ENCODE measurements at regions of chr12 and their contacts with region 1.

Region 1: GRCh38 chr12:26701604-26702215 is 131.3 kb downstream of the ITPR2 start:
- DNase-seq: no peak
- H3K4me3 Mint-ChIP-seq: no peak overlapping the region
- H3K27ac Mint-ChIP-seq: no peak overlapping the region
- H3K4me1 Mint-ChIP-seq: no peaks in the 10 kb centered on the region
- H3K27me3 Mint-ChIP-seq: no peaks in the 10 kb centered on the region

Region 2: GRCh38 chr12:26715232-26715631 is 13.5 kb after region 1 on chr12:
- CTCF ChIA-PET with region 1: interaction called, 12 read pairs
- DNase-seq: no peak
- H3K4me3 Mint-ChIP-seq: no peak overlapping the region
- H3K27ac Mint-ChIP-seq: no peak overlapping the region
- H3K4me1 Mint-ChIP-seq: no peaks in the 10 kb centered on the region
- H3K27me3 Mint-ChIP-seq: no peaks in the 10 kb centered on the region